Activated naive CD8-positive, alpha-beta T cell treated with anti-CD3 and anti-CD28 coated beads, Interleukin-2, amount 10 ng/mL, durations not matched to agents 7 days and 5 days (primary cell): ENCODE measurements at regions of chr12 and their contacts with region 1.

Region 1: GRCh38 chr12:68610370-68611093 is at the start of gene RAP1B:
- DNase-seq: peak; percentile 92
- ATAC-seq: peak; percentile 84
- H3K4me3 Mint-ChIP-seq: peak within 1 kb of the TSS; percentile 97
- H3K27ac Mint-ChIP-seq: peak within 1 kb of the TSS; percentile 94
- H3K4me1 Mint-ChIP-seq: peaks cover 41% of the 10 kb centered on the region
- H3K27me3 Mint-ChIP-seq: no peaks in the 10 kb centered on the region
- total RNA-seq, gene RAP1B: 233 to 257 TPM

Region 2: DNA sequence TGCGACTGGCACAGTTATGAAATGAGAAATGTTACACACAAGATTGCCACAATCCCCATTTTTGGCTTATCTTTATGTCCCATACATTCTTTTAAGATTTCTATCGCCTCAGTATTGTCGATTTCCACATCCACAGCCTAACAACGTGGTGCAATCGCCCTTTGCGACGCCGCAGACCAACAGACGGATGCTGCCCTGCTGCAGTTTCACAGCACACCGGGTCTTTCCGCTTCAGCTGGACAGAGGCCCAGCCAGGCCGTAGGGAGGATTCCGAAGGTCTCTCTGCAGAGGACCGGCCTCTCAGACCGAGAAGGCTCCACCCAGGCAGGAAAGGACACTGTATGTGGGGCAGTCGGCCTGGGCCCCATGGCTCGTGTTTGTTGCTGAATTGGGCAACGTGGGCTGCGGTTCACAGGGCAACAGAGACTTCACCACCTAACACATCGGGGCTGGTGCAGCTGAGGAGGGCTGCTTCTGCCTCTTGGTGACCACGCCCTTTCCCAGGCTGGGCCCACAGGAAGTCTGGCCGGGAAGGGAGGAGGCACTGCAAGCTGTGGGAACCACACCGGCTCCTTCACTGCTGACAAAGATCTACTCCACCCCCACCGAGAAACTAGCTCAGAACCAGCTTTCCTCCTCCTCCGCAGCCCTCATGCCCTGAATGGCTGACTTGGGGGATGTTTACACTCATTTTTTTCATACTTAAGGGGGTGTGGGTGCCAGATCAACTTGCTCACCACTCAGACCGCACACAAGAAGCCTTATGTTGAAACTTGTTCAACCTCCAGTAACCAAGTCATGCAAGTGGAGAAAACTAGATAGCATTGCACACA is 245.4 kb before region 1 on chr12:
- POLR2A ChIA-PET with region 1: interaction called, 14 read pairs
- DNase-seq: peak; percentile 82
- ATAC-seq: peak; percentile 94
- H3K4me3 Mint-ChIP-seq: peak overlapping the region; percentile 78
- H3K27ac Mint-ChIP-seq: peak overlapping the region; percentile 86
- H3K4me1 Mint-ChIP-seq: peaks cover 43% of the 10 kb centered on the region
- H3K27me3 Mint-ChIP-seq: no peaks in the 10 kb centered on the region

Region 3: DNA sequence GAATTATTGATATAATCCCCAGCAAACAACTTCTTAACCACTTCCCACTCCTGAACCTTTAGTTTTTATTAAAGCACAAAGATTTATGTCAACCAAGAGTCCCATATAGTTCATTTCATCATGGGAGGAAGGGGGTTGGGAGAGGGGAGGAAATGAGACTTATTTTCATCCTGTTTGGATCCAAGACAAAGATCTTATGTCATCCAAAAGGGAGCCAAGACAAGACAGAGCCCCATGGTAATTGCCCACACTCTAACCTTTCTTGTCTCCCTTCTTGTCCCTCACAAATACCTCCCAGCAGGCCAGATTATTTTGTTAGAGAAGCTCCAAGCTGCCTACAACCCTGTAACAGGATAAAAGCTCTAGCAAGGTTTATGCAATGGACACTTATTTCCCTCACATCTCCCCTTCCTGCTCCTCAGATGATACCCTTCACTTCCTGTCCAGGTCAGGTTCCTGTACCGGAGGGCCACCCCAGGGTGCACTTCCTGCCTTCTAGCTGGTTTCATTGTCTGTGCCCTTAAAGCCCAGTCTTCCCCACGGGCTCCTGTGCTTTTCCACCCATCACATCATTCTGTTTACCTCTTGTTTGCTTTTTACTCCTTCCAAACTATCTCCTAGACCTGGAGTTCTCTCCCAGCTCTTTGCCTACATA is 154.7 kb before region 1 on chr12:
- POLR2A ChIA-PET with region 1: interaction called, 16 read pairs
- DNase-seq: no peak
- ATAC-seq: peak; percentile 49
- H3K4me3 Mint-ChIP-seq: peak overlapping the region; percentile 59
- H3K27ac Mint-ChIP-seq: peak overlapping the region; percentile 82
- H3K4me1 Mint-ChIP-seq: peaks cover 55% of the 10 kb centered on the region
- H3K27me3 Mint-ChIP-seq: no peaks in the 10 kb centered on the region

Region 4: DNA sequence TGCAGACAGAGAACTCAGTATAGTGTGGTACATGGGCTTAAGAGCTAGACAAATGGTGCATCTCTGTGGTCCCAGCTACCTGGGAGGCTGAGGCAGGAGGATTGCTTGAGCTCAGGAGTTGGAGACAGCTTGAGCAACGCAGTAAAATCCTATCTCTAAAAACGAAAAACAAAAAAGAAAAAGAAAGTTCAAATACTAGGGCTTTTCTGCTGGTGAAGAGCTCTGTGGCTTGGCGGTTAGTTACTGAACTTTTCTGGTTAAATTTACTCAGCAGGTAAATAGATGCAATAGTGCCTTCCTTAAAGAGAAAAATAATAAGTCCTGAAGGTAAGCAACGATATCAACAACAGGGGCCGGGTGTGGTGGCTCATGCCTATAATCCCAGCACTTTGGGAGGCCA is 31.3 kb before region 1 on chr12:
- POLR2A ChIA-PET with region 1: interaction called, 25 read pairs
- DNase-seq: no peak
- ATAC-seq: peak; percentile 73
- H3K4me3 Mint-ChIP-seq: peak overlapping the region; percentile 66
- H3K27ac Mint-ChIP-seq: peak overlapping the region; percentile 82
- H3K4me1 Mint-ChIP-seq: peaks cover 24% of the 10 kb centered on the region
- H3K27me3 Mint-ChIP-seq: no peaks in the 10 kb centered on the region

Region 5: GRCh38 chr12:68807576-68808387 is 197.2 kb after region 1 on chr12 and contains the start of gene MDM2:
- POLR2A ChIA-PET with region 1: interaction called, 15 read pairs
- DNase-seq: peak; percentile 99
- ATAC-seq: peak; percentile 92
- H3K4me3 Mint-ChIP-seq: peak within 1 kb of the TSS; percentile 92
- H3K27ac Mint-ChIP-seq: peak within 1 kb of the TSS; percentile 100
- H3K4me1 Mint-ChIP-seq: peaks cover 18% of the 10 kb centered on the region
- H3K27me3 Mint-ChIP-seq: no peaks in the 10 kb centered on the region
- total RNA-seq, gene MDM2: 156 to 169 TPM